Aorta (tissue), 5 donors: ENCODE measurements at regions of chr1 and their contacts with region 1.

Region 1: DNA sequence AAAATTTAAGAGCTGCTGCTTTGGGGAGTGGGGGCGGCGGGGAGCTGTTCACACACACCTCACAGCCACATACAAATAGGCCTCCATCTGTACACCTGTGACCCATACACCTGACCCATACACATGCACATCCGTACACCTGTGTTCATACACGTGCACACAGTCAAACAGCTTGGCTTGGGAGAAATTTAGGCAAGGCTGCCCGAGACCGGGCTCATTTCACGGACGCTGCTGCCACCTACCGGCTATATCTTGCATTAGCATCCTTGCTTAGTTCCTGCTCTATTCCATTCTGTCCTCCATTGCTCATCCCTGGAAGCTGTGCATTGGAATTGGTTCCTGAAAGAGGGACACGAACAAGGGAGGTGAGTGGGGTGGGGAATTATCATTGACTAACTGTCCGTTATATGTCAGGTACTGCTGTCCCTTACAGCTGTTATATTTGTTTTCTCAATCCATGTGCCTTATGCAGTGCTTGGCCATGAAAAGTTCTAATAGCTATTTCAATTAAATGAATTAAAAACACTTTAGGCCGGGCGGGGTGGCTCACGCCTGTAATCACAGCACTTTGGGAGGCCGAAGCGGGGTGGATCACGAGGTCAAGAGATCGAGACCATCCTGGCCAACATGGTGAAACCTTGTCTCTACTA is 37.1 kb upstream of the EPB41 start:
- DNase-seq: peak; percentile 76 to 89
- ATAC-seq: peak; percentile 87
- H3K4me3 ChIP-seq: no peak overlapping the region
- H3K27ac ChIP-seq: no peak overlapping the region
- H3K4me1 ChIP-seq: no peaks in the 10 kb centered on the region
- H3K27me3 ChIP-seq: no peaks in the 10 kb centered on the region

Region 2: GRCh38 chr1:28369371-28370238 is 507.7 kb before region 1 on chr1 and contains the start of gene PHACTR4:
- intact Hi-C with region 1: loop called in 1 of 2 experiments (anchors 10 kb)
- DNase-seq: peak; percentile 95 to 96
- ATAC-seq: peak; percentile 98
- H3K4me3 ChIP-seq: peak within 1 kb of the TSS; percentile 62 to 77
- H3K27ac ChIP-seq: peak within 1 kb of the TSS; percentile 31 to 81
- H3K4me1 ChIP-seq: peaks cover 2 to 4% of the 10 kb centered on the region in 2 donors
- H3K27me3 ChIP-seq: no peaks in the 10 kb centered on the region
- total RNA-seq, gene PHACTR4: 32.4 to 38.9 TPM

Region 3: GRCh38 chr1:28518000-28518744 is 359.1 kb before region 1 on chr1:
- intact Hi-C with region 1: loop called (anchors 5 to 10 kb)
- DNase-seq: peak; percentile 92 to 97
- ATAC-seq: peak; percentile 97
- H3K4me3 ChIP-seq: peak overlapping the region; percentile 20 to 38
- H3K27ac ChIP-seq: peak overlapping the region in 1 of 2 donors; percentile 25
- H3K4me1 ChIP-seq: no peaks in the 10 kb centered on the region
- H3K27me3 ChIP-seq: no peaks in the 10 kb centered on the region

Region 4: DNA sequence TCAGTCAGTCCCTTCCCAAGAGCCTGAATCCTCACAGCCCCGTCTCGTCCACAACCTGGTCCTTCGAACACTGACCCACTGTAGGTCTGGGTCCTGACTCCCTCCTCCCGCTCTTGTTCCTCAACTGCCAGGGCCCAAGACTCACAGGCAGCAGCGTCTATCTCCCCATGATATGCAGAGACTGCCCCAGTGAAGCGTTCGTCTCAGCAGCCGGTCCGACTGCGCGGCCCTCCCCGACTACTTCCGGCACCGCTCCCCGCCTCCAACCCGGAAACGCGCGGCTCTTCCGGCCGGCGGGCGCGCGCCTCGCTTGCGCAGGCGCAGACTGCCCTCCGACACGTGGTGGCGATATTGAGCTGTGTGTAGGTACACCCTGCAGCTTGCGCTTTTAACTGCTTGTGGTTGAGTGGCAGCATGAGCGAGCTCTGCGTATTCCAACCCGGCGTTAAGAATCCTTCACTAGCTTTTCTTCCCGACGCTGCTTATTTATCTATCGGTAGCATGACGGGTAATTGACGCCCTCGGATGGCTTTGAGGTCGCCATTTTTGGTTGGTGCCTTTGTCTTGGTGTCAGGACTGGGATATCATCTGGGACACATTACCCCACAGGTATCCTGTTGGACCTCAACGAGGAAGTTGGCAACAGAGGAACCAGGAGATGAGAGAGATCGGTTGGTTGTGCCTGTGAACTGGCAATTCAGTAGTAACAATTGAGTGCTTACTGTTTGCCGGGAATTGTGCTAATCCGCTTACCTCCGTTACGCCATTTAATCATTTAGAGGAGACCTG is 234.2 kb before region 1 on chr1 and contains the start of gene TAF12:
- intact Hi-C with region 1: loop called in 1 of 2 experiments (anchors 10 kb)
- DNase-seq: peak; percentile 94 to 96
- ATAC-seq: peak; percentile 98
- H3K4me3 ChIP-seq: peak within 1 kb of the TSS; percentile 56 to 92
- H3K27ac ChIP-seq: peak within 1 kb of the TSS; percentile 74 to 94
- H3K4me1 ChIP-seq: no peaks in the 10 kb centered on the region
- H3K27me3 ChIP-seq: no peaks in the 10 kb centered on the region
- total RNA-seq, gene TAF12: 14.6 to 17.1 TPM

Region 5: GRCh38 chr1:28779751-28780408 is 97.4 kb before region 1 on chr1:
- intact Hi-C with region 1: loop called (anchors 1 to 2 kb)
- DNase-seq: peak in 1 of 2 donors; percentile 36
- ATAC-seq: no peak
- H3K4me3 ChIP-seq: no peak overlapping the region
- H3K27ac ChIP-seq: no peak overlapping the region
- H3K4me1 ChIP-seq: no peaks in the 10 kb centered on the region
- H3K27me3 ChIP-seq: no peaks in the 10 kb centered on the region

Region 6: DNA sequence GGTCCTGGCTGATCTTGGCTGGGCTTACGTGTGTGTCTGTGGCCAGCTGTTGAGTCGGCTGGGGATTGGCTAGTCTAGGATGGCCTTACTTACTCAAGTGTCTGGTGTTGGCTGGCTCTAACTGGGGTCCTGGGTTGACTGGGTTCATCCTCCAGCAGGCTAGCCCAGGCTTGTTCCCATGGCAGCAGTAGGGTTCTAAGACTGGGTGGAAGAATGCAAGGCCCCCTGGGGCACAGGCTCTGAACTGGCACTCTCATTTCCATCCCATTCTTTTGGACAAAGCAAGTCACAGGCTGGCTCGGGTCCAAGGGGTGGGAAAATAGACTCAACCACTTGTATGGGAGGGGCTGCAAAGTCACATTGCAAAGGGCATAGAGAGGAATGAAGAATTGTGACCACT is 73.2 kb before region 1 on chr1:
- intact Hi-C with region 1: no loop called
- DNase-seq: no peak
- ATAC-seq: no peak
- H3K4me3 ChIP-seq: no peak overlapping the region
- H3K27ac ChIP-seq: no peak overlapping the region
- H3K4me1 ChIP-seq: no peaks in the 10 kb centered on the region
- H3K27me3 ChIP-seq: no peaks in the 10 kb centered on the region